A673 (cell line): ENCODE measurements at regions of chr2 and their contacts with region 1.

Region 1: DNA sequence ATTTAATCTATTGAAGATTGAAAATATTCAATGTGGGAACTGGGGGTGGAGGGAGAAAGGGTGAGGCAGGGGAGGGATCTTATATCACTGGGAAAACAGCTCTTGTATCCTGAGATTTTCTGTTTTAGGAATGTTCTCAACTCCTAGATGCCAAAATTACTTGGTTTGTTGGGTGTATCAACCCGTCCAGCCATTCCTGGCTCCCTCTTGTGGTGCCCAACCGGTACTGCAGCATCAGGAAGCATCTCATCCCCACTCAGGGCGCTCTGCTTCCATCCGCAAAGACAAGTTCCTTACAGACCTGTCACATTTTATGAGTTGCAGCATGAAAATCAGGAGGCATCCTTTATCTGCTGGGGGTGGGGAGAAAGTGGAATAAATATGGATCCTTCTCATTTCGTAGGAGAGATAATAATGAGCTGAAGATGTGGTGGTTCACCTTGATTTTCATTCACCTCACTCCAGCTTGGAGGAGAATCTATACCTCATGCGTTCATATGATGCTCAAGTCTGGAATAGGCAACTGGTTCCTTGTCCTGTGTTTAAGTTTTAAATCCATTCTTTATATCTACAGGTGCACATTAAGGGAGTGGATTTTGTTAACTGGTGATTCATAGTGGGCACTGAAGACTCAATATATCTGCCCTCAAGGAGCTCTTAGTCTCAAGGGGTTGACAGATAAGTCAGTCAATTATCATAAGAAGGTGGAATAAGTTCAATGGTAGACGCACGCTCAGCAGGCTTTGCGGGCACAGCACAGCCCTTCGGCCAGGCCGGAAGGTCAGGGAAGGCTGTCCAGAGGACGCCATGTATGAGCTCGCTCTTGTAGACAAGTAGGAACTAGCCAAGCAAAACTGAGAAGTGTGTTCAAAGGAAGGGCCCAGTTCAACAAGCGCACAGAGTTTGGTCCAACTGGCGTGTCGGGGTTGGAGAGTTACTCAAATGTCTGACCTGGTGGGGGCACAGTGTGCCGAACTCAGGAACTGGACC is 127.3 kb downstream of the RNF144A start:
- DNase-seq: peak; percentile 60
- H3K4me3 ChIP-seq: no peak overlapping the region
- H3K27ac ChIP-seq: no peak overlapping the region
- H3K4me1 ChIP-seq: no peaks in the 10 kb centered on the region
- H3K27me3 ChIP-seq: no peaks in the 10 kb centered on the region
- CTCF ChIP-seq: peak; percentile 90

Region 2: DNA sequence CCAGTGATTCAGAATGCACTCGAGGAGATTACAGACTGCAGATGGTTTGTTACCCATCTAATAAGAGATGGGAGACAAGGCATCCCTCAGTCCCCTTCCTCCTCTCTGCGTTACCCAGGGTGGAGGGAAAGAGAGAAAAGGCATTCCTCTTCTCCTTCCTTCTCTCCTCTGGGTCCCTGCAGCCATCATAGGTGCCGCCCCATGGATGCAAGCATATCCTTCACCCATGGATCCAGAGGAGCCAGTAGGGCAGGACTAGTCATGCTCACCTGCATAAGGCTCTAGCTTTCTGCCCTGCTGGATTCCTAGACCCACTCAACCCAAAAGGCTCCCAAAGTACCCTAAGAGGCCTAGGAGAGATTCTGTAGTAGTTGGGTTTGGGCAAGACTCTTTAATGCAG is 199.2 kb before region 1 on chr2:
- CTCF ChIA-PET with region 1: no interaction called
- POLR2A ChIA-PET with region 1: no interaction called
- intact Hi-C with region 1: no loop called
- DNase-seq: no peak
- H3K4me3 ChIP-seq: no peak overlapping the region
- H3K27ac ChIP-seq: no peak overlapping the region
- H3K4me1 ChIP-seq: no peaks in the 10 kb centered on the region
- H3K27me3 ChIP-seq: no peaks in the 10 kb centered on the region
- CTCF ChIP-seq: no peak

Region 3: GRCh38 chr2:7083577-7084509 is 39.3 kb after region 1 on chr2:
- CTCF ChIA-PET with region 1: no interaction called
- POLR2A ChIA-PET with region 1: no interaction called
- intact Hi-C with region 1: loop called (anchors 5 kb)
- DNase-seq: peak; percentile 73
- H3K4me3 ChIP-seq: no peak overlapping the region
- H3K27ac ChIP-seq: no peak overlapping the region
- H3K4me1 ChIP-seq: no peaks in the 10 kb centered on the region
- H3K27me3 ChIP-seq: no peaks in the 10 kb centered on the region
- CTCF ChIP-seq: peak; percentile 72